Posterior vena cava (tissue), 2 donors: ENCODE measurements at regions of chr9 and their contacts with region 1.

Region 1: DNA sequence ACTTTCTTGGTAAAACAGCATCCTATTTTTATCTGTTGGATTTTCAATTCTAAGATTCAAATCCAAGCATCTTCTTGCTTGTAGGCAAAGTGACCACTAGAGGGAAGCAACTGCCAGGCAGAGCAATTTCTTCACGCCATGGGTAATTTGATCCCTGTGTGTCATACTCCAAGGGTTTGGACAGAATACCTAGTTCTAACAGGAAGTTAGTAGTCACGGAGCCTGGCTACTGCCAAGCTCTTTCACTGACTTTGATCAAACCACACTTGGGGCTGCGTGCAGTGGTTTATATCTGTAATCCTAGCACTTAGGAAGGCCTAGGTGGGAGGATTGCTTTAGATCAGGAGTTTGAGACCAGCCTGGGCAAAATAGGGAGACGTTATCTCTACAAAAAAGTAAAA is 473.6 kb upstream of the TNC start:
- DNase-seq: peak; percentile 82

Region 2: GRCh38 chr9:116572095-116572748 is 980.6 kb after region 1 on chr9:
- intact Hi-C with region 1: loop called (anchors 1 to 5 kb)
- DNase-seq: peak; percentile 96

Region 3: GRCh38 chr9:116656501-116656971 is 1065.0 kb after region 1 on chr9:
- intact Hi-C with region 1: loop called (anchors 5 to 10 kb)
- DNase-seq: no peak